ENCODE measurements at regions of chr4 and their contacts with region 1.

Region 1: GRCh38 chr4:177555007-177555574 is 112.9 kb upstream of the AGA start:
- DNase-seq: no peak
- ATAC-seq: peak; percentile 64
- H3K4me3 ChIP-seq: no peak overlapping the region
- H3K27ac ChIP-seq: no peak overlapping the region
- H3K4me1 ChIP-seq: no peaks in the 10 kb centered on the region
- H3K27me3 ChIP-seq: no peaks in the 10 kb centered on the region
- CTCF ChIP-seq: peak; percentile 47 to 81 (median 51); a peak in 5 of 6 replicates
- POLR2A ChIP-seq: no peak
- RAD21 ChIP-seq: peak; percentile 86

Region 2: DNA sequence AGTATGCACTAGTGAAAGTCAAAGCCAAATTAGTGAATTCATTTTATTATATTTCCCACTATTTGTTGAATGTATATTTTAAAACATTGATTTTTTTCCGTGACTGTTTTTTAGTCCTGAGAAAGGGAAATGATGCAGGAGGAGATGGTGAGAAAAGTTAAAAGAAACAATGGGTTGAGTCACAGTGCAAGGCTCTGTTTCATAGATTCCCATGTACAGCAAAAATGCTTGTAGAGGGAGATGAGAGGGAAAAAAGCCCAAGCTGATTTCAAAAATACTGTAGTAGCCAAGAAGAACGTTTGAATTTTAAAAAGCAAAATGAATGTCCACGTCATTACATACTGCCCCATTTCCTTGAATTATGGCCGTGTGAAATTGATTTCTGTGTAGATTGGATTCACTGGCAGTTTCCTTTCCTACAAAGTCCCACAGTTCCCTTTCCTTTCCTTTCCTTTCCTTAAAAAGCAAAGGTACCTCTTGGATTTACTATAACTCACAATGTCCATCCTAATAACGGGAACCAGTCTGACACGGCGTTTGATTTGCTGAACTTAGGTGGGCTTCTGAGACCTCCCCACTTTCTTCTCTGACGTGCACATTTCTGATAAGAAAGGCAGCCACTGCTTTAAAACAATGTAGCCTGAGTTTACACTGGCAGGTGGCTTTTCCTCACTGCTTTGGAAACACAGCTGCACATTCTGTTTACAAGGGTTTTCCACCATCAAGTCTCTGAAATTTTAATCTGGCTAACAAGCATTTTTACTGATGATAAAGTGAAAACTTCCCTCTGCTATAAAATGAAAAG is 1171.6 kb before region 1 on chr4:
- CTCF ChIA-PET with region 1: no interaction called
- POLR2A ChIA-PET with region 1: no interaction called
- RAD21 ChIA-PET with region 1: no interaction called
- intact Hi-C with region 1: loop called (anchors 10 kb)
- DNase-seq: no peak
- ATAC-seq: no peak
- H3K4me3 ChIP-seq: no peak overlapping the region
- H3K27ac ChIP-seq: no peak overlapping the region
- H3K4me1 ChIP-seq: no peaks in the 10 kb centered on the region
- H3K27me3 ChIP-seq: no peaks in the 10 kb centered on the region
- CTCF ChIP-seq: no peak
- POLR2A ChIP-seq: no peak
- RAD21 ChIP-seq: no peak

Region 3: DNA sequence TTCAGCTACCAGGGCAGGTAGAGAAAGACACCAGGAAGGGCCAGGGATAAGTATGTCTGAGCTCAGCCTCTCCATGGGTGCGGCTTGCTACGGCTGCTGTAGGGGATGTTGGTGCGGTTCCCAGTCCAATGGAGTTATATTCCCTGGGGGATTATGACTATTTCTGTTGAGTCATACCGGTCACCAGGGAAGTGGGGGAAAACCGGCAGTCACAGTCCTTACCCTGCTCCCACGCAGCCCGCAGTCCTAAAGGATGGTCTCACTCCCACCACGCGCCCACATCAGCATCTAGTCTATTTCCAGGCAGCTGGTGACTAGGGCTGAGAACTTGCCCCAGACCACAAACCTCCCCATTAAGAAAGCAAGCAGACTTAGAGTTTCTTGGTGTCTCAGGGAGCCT is 954.0 kb before region 1 on chr4:
- CTCF ChIA-PET with region 1: no interaction called
- POLR2A ChIA-PET with region 1: no interaction called
- RAD21 ChIA-PET with region 1: no interaction called
- intact Hi-C with region 1: no loop called
- DNase-seq: no peak
- ATAC-seq: no peak
- H3K4me3 ChIP-seq: no peak overlapping the region
- H3K27ac ChIP-seq: no peak overlapping the region
- H3K4me1 ChIP-seq: no peaks in the 10 kb centered on the region
- H3K27me3 ChIP-seq: no peaks in the 10 kb centered on the region
- CTCF ChIP-seq: no peak
- POLR2A ChIP-seq: no peak
- RAD21 ChIP-seq: no peak

Region 4: DNA sequence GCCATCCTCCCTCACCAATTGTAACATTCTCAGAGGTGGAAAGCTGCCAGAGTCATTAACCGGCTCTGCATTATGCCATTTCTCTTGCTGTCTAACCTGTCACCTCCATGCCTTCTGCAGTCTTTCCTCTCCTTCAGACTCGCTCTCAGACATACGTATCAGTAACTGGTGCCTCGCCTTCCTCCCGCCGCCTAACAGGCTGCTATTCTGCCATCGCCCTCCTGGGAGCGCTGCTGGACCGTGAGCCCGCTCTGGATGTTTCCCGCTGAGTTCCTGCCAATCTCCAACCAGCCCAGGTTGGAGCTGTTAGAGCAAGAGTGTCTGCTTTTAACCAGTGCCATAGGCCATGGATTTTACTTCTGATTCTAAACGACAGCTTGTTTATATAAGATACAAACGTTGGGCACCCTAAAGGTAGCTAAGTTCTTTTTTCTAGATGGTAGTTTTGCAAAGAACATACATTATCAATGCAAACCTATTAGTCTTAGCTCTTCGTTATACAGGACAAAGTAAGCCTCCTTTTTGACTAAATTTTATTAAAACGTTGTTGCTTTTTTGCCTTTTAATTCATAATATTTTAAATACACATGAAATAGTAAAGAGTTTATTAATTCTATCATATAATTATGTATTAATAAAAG is 304.9 kb before region 1 on chr4:
- CTCF ChIA-PET with region 1: interaction called, 3 read pairs
- POLR2A ChIA-PET with region 1: no interaction called
- RAD21 ChIA-PET with region 1: interaction called in 1 of 2 experiments, 4 read pairs
- intact Hi-C with region 1: loop called (anchors 2 kb)
- DNase-seq: peak; percentile 59
- ATAC-seq: peak; percentile 99
- H3K4me3 ChIP-seq: peak overlapping the region in 1 of 2 experiments; percentile 31; a peak in 2 of 4 replicates
- H3K27ac ChIP-seq: no peak overlapping the region
- H3K4me1 ChIP-seq: peaks cover 0 to 4% of the 10 kb centered on the region in 2 experiments; a peak in 2 of 4 replicates
- H3K27me3 ChIP-seq: no peaks in the 10 kb centered on the region
- CTCF ChIP-seq: peak; percentile 74 to 99 (median 98)
- POLR2A ChIP-seq: no peak
- RAD21 ChIP-seq: peak; percentile 99

Region 5: DNA sequence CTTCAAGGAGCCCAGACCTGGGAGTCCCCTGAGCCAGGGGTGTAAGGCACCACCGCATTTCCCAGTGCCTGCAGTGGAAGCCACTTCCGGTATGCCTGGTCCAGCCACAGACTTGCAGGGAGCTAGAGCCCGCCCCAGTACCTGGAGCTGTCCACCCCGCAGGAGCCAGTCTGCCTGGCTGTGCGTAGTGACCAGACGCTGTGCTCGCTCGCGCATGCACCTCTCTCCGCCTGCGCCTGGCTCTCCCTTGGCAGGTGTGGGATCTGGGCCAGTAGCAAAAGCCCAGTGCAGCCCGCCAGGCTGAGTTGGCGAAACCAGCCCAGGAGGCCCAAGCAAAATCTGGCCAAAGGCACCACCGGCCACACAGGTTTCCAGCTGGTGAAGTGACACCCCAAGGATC is 860.8 kb after region 1 on chr4:
- CTCF ChIA-PET with region 1: no interaction called
- POLR2A ChIA-PET with region 1: no interaction called
- RAD21 ChIA-PET with region 1: no interaction called
- intact Hi-C with region 1: loop called (anchors 10 kb)
- DNase-seq: no peak
- ATAC-seq: no peak
- H3K4me3 ChIP-seq: no peak overlapping the region
- H3K27ac ChIP-seq: no peak overlapping the region
- H3K4me1 ChIP-seq: no peaks in the 10 kb centered on the region
- H3K27me3 ChIP-seq: no peaks in the 10 kb centered on the region
- CTCF ChIP-seq: no peak
- POLR2A ChIP-seq: no peak
- RAD21 ChIP-seq: no peak